ENCODE measurements at regions of chr4 and their contacts with region 1.

Region 1: DNA sequence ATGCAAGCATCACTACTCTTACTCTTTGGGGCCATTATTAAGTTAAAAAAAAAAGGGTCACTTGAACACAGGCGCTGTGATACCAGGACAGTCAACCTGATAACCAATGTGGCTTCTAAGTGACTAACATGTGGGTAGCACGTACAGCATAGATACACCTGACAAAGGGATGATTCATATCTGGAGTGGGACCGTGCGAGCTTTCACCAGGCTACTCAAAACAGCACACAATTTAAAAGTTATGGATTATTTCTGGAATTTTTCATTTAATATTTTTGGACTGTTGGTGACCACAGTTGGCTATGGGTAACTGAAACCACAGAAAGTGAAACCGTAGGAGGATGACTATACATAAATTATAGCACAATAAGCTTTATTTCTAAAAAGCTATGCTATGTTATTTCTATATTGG is 113.8 kb upstream of the STIM2 start:
- DNase-seq: peak; percentile 68
- H3K4me3 Mint-ChIP-seq: no peak overlapping the region
- H3K27ac Mint-ChIP-seq: no peak overlapping the region
- H3K4me1 Mint-ChIP-seq: peaks cover 7% of the 10 kb centered on the region
- H3K27me3 Mint-ChIP-seq: no peaks in the 10 kb centered on the region

Region 2: DNA sequence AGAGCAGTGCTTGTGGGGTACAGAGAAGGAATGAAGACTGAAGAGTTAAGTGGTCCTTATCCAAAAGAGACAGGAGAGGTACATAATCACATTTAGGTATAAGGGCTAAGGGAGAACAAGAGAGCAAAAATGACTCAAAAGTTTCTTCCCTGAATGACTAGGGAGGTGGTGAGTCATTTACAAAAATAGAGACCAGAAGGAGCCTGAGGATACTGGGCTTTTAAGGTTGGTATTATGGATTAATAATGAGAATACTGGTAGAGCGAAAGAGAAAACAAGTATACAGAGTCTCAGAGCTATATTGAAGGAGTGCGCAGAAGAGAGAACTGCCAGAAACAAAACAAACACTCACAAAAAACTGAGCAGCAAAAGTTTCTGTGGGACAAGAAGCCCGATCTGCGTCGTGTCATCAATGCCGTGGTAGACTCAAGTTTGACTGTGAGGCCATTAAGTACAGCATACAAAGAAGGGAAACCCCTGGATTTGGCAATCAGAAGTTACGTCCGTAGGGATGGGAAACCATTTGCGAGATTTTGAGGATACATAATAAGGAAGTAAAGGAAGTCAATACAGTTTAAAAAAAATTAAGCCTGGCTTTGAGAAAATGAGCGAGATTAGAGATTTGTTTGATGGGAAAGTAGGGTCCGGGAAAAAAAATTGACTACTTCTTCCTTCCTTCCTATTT is 15.3 kb before region 1 on chr4:
- CTCF ChIA-PET with region 1: no interaction called
- intact Hi-C with region 1: loop called (anchors 2 kb)
- DNase-seq: no peak
- H3K4me3 Mint-ChIP-seq: no peak overlapping the region
- H3K27ac Mint-ChIP-seq: no peak overlapping the region
- H3K4me1 Mint-ChIP-seq: peaks cover 11% of the 10 kb centered on the region
- H3K27me3 Mint-ChIP-seq: no peaks in the 10 kb centered on the region